Sigmoid colon (tissue), 7 donors: ENCODE measurements at regions of chr13 and their contacts with region 1.

Region 1: DNA sequence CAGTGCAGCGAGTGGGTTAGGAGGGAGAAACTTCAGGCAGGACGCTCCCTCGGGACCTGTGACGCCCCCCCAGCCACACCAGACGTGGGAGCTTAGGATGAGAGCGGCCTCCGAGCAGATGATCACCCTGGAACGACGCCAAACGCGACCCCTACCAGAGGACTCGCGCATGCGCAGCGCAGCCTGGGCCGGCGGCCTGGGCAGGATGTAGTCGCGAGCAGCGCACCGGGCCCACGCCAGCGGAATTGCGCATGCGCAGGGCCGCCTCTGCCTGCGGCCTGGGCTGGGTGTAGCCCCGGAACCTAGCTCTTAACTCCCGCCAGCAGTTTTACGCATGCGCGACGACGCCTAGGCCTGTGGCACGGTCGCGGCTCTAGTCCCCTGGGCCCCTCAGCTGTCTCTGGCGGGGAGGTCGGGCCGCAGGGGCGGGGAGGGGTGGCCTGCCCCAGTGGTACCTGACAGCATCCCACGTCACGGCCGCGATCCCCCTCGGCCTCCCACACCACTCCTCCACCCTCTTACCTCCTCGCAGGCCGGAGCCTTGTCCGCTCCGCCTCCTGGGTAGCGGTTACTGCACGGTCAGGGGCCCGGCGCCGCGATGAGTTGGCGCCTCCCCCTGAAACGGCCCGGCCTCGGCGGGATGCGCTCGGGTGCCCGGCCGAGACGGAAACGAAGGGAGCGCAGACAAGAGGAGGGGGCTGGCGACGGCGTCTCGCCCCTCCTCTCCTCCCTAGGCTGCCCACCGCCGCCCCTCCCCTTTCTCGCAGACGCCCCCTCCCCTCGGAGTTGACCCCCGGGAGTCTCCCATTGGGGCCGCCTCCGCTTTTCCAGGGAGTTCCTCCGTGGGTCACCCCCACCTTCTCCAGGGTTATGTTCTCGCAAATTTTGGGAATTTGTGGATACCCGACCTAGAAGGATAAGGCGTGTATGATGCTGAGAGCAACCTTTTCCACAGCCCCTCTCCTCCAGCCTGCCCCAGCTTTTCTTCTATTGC is at the start of gene RCBTB2:
- DNase-seq: peak; percentile 99
- H3K4me3 ChIP-seq: peak within 1 kb of the TSS; percentile 77 to 81 (median 78)
- H3K27ac ChIP-seq: peak within 1 kb of the TSS; percentile 94 to 98 (median 97)
- H3K4me1 ChIP-seq: peaks cover 0 to 19% (median 11%) of the 10 kb centered on the region in 4 donors
- H3K27me3 ChIP-seq: no peaks in the 10 kb centered on the region
- CTCF ChIP-seq: no peak
- EP300 ChIP-seq: peak in 1 of 4 donors; percentile 57
- POLR2A ChIP-seq: peak; percentile 83 to 93
- total RNA-seq, gene RCBTB2: 8.6 to 21.9 (median 14.9) TPM

Region 2: DNA sequence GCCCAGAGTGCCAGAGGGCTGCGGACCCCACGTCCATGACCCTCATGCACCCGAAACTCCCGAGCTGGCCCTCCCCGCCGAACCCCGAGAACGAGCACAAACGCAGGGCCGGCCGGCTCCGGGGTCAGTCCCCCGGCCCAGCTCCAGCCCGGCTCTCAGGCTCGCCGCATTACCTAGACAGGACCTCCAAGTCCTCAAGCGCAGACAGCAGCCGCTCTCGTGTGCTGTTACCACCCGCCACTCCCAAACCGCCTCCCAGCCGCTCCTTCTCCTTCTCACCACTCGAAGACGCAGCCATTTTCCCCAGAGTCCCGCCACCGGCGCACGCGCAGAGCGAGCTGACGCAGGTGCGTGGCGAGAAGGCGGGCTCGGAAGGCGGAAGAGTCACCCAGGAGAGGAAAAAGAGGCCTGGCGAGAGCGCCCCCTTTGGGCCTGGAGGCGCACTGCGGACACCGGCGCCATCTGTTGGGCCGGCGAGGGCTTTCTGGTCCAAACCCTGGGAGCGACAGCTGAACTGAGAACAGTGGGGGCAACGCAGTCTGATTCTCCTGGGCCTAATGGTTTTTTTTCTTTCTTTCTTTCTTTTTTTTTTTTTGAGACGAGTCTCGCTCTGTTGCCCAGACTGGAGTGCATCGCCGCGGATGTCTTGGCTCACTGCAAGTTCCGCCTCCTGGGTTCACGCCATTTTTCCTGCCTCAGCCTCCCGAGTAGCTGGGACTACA is 437.9 kb before region 1 on chr13 and contains the start of gene MED4:
- intact Hi-C with region 1: loop called (anchors 5 kb)
- DNase-seq: peak; percentile 96
- H3K4me3 ChIP-seq: peak within 1 kb of the TSS; percentile 80 to 95 (median 90)
- H3K27ac ChIP-seq: peak within 1 kb of the TSS; percentile 78 to 88 (median 88)
- H3K4me1 ChIP-seq: peaks cover 0 to 40% (median 25%) of the 10 kb centered on the region in 4 donors
- H3K27me3 ChIP-seq: no peaks in the 10 kb centered on the region
- CTCF ChIP-seq: peak; percentile 96 to 99 (median 98)
- EP300 ChIP-seq: peak in 1 of 4 donors; percentile 74
- POLR2A ChIP-seq: peak; percentile 88 to 90
- total RNA-seq, gene MED4: 38.5 to 63.5 (median 43.5) TPM

Region 3: GRCh38 chr13:48303359-48304142 is 229.3 kb before region 1 on chr13 and contains the start of gene RB1:
- intact Hi-C with region 1: loop called (anchors 5 kb)
- DNase-seq: peak; percentile 97
- H3K4me3 ChIP-seq: peak within 1 kb of the TSS; percentile 81 to 95 (median 84)
- H3K27ac ChIP-seq: peak within 1 kb of the TSS; percentile 96 to 99 (median 98)
- H3K4me1 ChIP-seq: peaks cover 0 to 31% (median 26%) of the 10 kb centered on the region in 4 donors
- H3K27me3 ChIP-seq: no peaks in the 10 kb centered on the region
- CTCF ChIP-seq: no peak
- EP300 ChIP-seq: peak in 1 of 4 donors; percentile 76
- POLR2A ChIP-seq: peak; percentile 96 to 98
- total RNA-seq, gene RB1: 26.0 to 35.6 (median 32.3) TPM

Region 4: DNA sequence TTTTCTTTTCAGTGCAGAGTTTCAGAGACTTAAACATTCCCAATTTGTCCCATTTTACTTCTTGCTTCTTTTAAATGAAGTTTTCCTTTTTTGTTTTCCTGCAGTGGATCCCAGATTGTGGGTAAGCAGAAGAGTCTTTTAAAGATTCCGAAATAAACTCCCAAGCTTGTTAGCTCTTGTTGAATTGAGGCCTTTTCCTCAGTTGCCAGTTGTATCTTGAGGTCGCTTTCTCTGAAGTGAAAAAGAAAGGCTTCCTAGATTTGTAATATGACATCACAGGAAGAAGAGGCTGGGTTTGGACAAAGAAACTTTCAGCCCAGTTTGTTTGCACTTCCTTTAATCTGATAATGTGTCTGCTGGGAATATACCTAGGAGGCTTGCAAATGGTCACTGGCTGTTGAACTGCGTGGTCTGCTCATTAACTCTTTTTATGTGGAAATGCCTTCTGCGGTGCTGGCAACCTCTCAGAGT is 119.9 kb before region 1 on chr13 and contains the start of gene LPAR6:
- intact Hi-C with region 1: no loop called
- DNase-seq: no peak
- H3K4me3 ChIP-seq: peak within 1 kb of the TSS; percentile 34 to 52 (median 48)
- H3K27ac ChIP-seq: peak within 1 kb of the TSS; percentile 68 to 72 (median 70)
- H3K4me1 ChIP-seq: peaks cover 0 to 6% (median 0%) of the 10 kb centered on the region in 4 donors
- H3K27me3 ChIP-seq: no peaks in the 10 kb centered on the region
- CTCF ChIP-seq: no peak
- EP300 ChIP-seq: no peak
- POLR2A ChIP-seq: peak; percentile 37 to 71
- total RNA-seq, gene LPAR6: 11.5 to 24.2 (median 15.0) TPM

Region 5: DNA sequence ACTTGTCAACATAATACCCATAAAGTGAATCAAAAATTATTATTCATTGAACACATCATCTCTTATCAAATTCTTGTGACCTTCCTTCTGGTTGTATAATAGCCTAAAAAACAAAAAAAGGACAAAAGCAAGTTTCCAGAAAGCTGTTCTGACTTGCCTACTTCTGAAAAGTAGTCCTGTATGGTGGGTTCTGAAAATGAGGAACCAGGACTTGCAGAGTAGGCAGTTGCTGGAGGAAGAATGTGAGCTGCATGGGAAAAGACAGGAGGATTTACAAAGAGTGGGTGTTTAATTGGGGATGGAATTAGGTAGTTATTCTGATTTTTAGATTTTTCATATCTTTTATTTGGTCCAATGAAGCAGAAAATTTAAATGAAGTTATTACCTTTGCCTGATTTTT is 56.6 kb before region 1 on chr13:
- intact Hi-C with region 1: no loop called
- DNase-seq: no peak
- H3K4me3 ChIP-seq: peak overlapping the region in 1 of 4 donors; percentile 6
- H3K27ac ChIP-seq: peak overlapping the region in 2 of 4 donors; percentile 20
- H3K4me1 ChIP-seq: no peaks in the 10 kb centered on the region
- H3K27me3 ChIP-seq: no peaks in the 10 kb centered on the region
- CTCF ChIP-seq: no peak
- EP300 ChIP-seq: no peak
- POLR2A ChIP-seq: no peak

Region 6: DNA sequence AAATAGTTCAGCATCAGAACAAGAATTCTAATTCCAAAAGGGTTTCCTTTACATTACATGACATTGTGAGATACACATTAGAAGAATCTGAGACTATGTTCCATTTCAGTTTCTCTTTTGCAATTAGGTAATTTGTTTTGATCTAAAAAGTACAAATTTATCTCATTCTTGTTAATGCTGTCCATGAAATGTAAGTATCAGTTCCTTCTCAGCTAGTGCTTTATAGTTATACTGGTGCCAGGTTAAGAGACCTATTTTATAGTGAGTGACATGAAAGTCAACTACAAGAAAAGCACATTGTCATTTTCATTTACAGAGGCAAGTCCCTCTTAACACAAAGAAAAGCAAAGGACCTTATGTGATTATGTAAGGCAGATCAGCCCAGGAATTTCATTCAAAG is 43.8 kb before region 1 on chr13:
- intact Hi-C with region 1: no loop called
- DNase-seq: no peak
- H3K4me3 ChIP-seq: no peak overlapping the region
- H3K27ac ChIP-seq: no peak overlapping the region
- H3K4me1 ChIP-seq: peaks cover 0 to 10% (median 0%) of the 10 kb centered on the region in 4 donors
- H3K27me3 ChIP-seq: no peaks in the 10 kb centered on the region
- CTCF ChIP-seq: no peak
- EP300 ChIP-seq: no peak
- POLR2A ChIP-seq: no peak

Region 7: DNA sequence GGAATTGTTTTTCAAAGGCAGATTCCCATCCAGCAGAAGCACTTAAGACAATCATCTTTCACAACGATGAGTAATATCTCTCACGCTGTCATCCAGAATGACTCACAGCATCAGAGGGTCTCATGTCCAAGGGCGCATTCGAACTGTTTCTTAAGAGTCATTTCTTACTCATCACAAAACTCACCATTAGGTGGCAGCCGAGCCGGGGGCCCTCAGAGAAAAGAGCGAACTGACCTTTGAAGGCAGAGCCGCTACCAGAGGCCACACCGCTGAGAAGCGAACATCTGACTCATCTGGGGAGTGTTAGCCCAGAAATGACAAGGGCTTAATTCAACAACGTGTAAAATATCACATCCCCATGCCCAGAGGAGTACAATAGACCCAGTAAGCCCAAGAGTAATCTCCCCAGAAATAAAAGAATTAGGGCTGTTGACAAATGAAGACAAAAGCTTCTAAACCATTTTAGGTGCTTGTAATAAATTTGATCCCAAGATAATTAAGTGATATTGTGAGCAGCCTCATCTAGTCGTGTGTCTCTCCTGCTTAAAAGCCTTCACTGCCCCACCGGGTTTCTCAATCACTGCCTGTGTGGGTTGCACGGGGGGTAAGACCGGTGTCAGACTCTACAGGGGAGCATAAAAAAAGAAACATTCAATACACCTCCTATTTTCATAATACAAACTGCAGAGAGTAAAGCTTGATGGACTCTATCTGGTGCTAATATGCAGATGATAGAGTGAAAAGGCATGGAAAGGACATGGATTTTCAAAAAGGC is 217.1 kb after region 1 on chr13:
- intact Hi-C with region 1: loop called (anchors 5 kb)
- DNase-seq: peak; percentile 94
- H3K4me3 ChIP-seq: no peak overlapping the region
- H3K27ac ChIP-seq: peak overlapping the region; percentile 74 to 83 (median 80)
- H3K4me1 ChIP-seq: peaks cover 0 to 30% (median 23%) of the 10 kb centered on the region in 4 donors
- H3K27me3 ChIP-seq: no peaks in the 10 kb centered on the region
- CTCF ChIP-seq: peak; percentile 18 to 53 (median 46)
- EP300 ChIP-seq: peak in 1 of 4 donors; percentile 40
- POLR2A ChIP-seq: no peak

Region 8: DNA sequence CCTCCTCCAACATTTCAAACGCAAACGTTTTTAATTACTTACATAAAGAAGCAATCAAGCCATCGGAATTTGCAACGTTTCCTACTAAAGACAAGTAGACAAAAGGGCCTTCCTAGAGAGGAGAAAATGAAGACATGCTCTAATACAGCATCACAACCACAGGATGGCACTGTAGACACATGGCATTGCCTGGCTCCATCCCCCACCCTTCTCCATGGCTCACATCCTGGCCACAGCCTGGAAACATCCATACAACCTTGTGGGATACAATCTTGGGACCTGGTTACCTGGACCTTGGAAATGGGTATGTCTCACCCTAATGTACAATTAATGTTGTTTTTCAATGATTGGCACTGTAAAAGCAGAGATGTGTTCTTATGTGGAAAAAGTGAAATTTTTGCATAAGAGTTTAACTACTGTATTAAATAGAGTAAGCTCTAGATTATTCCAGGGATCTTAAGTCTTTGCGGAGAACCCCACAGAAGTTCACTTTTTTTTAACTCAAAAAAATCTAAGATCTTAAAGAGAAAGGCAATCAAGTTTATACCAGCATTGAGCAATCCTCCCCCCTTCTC is 1137.0 kb after region 1 on chr13:
- intact Hi-C with region 1: no loop called
- DNase-seq: peak; percentile 73
- H3K4me3 ChIP-seq: no peak overlapping the region
- H3K27ac ChIP-seq: no peak overlapping the region
- H3K4me1 ChIP-seq: peaks cover 0 to 6% (median 0%) of the 10 kb centered on the region in 4 donors
- H3K27me3 ChIP-seq: no peaks in the 10 kb centered on the region
- CTCF ChIP-seq: peak; percentile 38 to 64 (median 50)
- EP300 ChIP-seq: no peak
- POLR2A ChIP-seq: no peak

Region 9: DNA sequence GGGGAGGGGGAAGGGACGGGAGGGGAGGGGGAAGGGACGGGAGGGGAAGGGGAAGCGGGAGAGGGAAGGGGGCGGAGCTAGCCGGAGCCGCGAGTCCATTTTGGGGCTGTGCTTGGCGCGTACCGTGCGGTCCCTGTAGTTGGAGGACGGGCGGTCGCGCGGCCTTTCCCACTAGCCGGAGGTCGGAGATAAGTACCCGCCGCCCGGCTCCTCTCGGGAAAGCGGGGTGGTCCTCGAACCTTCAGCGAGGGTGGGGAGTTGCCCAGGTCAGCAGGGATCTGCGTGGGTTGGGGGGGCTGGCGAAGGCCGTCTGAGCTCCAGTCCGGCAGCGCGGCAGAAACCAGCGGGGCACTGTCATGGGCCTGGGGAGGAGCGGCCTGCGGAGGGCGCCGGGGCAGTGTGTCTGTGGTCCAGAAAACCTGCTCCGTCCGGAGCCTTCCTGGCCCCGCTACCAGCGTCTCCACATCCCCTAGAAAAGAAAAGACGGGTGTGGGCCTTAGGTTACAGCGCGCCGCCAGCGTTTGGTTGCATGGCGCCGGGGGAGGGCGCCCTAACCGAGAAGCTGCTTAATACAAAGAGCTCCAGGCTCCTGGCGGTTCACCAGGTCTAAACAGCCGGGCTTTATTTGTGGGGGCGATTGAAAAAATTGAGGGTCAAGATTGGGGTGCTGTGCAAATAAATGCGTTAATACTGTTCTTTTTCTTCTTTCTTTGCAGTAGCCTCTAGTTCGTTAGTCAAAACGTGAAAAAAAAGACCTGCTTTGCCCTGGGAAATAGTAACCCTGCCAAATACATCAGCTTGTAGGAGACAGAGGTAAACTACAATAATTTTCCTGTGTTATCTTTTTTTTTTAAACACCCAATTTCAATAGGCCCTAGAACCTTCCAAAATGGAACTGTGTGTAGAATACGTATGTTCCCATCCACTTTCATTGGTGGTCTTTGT is 1464.4 kb after region 1 on chr13 and contains the start of gene TRIM13:
- intact Hi-C with region 1: loop called (anchors 5 kb)
- DNase-seq: peak; percentile 95
- H3K4me3 ChIP-seq: peak within 1 kb of the TSS; percentile 78 to 89 (median 86)
- H3K27ac ChIP-seq: peak within 1 kb of the TSS; percentile 99 to 100 (median 99)
- H3K4me1 ChIP-seq: peaks cover 0 to 51% (median 46%) of the 10 kb centered on the region in 4 donors
- H3K27me3 ChIP-seq: no peaks in the 10 kb centered on the region
- CTCF ChIP-seq: peak; percentile 34 to 76 (median 64)
- EP300 ChIP-seq: no peak
- POLR2A ChIP-seq: peak; percentile 47 to 58
- total RNA-seq, gene TRIM13: 17.1 to 25.0 (median 22.9) TPM